ENCODE measurements at regions of chr11 and their contacts with region 1.

Region 1: GRCh38 chr11:102614485-102614884 is 10.6 kb downstream of the MMP20 start:
- DNase-seq: no peak
- ATAC-seq: no peak
- H3K4me3 Mint-ChIP-seq: no peak overlapping the region
- H3K27ac Mint-ChIP-seq: no peak overlapping the region
- H3K4me1 Mint-ChIP-seq: peaks cover 9% of the 10 kb centered on the region
- H3K27me3 Mint-ChIP-seq: no peaks in the 10 kb centered on the region

Region 2: DNA sequence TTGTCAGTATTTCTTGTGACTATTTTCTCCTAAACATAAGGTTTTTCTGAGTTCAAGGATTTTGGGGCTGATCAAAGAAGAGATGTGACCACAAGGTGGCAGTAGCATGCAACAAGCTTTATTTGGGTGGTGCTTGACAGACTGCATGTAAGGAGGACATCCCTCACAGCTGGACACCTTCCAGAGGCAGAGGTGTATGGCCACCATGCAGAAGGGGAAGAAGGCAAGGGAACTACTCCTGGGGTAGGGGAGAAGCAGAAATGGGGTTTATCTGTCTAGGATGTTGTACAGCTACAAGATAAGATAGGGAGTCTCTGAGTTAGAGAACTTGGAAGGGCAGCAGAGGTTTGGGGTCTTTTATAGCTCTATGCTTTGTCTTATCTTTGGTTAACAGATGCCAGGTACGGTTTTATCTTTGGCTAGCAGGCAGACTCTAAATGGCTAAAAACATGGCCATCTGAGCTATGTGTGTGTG is 272.6 kb before region 1 on chr11:
- CTCF ChIA-PET with region 1: interaction called, 148 read pairs
- POLR2A ChIA-PET with region 1: no interaction called
- DNase-seq: peak; percentile 86
- ATAC-seq: peak; percentile 69
- H3K4me3 Mint-ChIP-seq: no peak overlapping the region
- H3K27ac Mint-ChIP-seq: no peak overlapping the region
- H3K4me1 Mint-ChIP-seq: peaks cover 21% of the 10 kb centered on the region
- H3K27me3 Mint-ChIP-seq: no peaks in the 10 kb centered on the region

Region 3: GRCh38 chr11:102390667-102391465 is 223.6 kb before region 1 on chr11:
- CTCF ChIA-PET with region 1: interaction called, 43 read pairs
- POLR2A ChIA-PET with region 1: no interaction called
- DNase-seq: peak; percentile 64
- ATAC-seq: peak; percentile 70
- H3K4me3 Mint-ChIP-seq: no peak overlapping the region
- H3K27ac Mint-ChIP-seq: no peak overlapping the region
- H3K4me1 Mint-ChIP-seq: peaks cover 26% of the 10 kb centered on the region
- H3K27me3 Mint-ChIP-seq: no peaks in the 10 kb centered on the region

Region 4: DNA sequence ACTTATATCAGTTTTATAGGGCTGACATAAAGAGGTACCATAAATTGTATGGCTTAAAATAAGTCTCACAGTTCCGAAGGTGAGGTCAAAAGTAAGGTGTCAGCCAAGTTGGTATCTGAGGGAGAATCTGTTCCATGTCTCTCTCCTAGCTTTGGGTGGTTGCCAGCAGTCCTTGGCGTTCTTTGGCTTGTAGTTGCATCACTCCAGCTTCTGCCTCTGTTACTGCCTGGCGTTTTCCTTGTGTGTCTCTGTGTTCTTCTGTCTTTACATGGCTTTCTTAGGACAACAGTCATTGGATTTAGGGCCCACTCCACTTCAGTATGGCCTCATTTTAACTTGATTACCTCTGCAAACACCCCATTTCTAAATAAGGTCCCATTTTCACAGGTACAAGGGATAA is 100.6 kb before region 1 on chr11:
- CTCF ChIA-PET with region 1: interaction called, 19 read pairs
- POLR2A ChIA-PET with region 1: no interaction called
- DNase-seq: no peak
- ATAC-seq: no peak
- H3K4me3 Mint-ChIP-seq: no peak overlapping the region
- H3K27ac Mint-ChIP-seq: no peak overlapping the region
- H3K4me1 Mint-ChIP-seq: no peaks in the 10 kb centered on the region
- H3K27me3 Mint-ChIP-seq: peaks cover 8% of the 10 kb centered on the region

Region 5: GRCh38 chr11:102577182-102577581 is 37.3 kb before region 1 on chr11:
- CTCF ChIA-PET with region 1: interaction called, 17 read pairs
- POLR2A ChIA-PET with region 1: no interaction called
- DNase-seq: no peak
- ATAC-seq: peak; percentile 81
- H3K4me3 Mint-ChIP-seq: peak overlapping the region; percentile 40
- H3K27ac Mint-ChIP-seq: peak overlapping the region; percentile 66
- H3K4me1 Mint-ChIP-seq: peaks cover 27% of the 10 kb centered on the region
- H3K27me3 Mint-ChIP-seq: no peaks in the 10 kb centered on the region

Region 6: GRCh38 chr11:102760355-102761035 is 146.0 kb after region 1 on chr11:
- CTCF ChIA-PET with region 1: no interaction called
- POLR2A ChIA-PET with region 1: no interaction called
- DNase-seq: no peak
- ATAC-seq: no peak
- H3K4me3 Mint-ChIP-seq: no peak overlapping the region
- H3K27ac Mint-ChIP-seq: no peak overlapping the region
- H3K4me1 Mint-ChIP-seq: peaks cover 2% of the 10 kb centered on the region
- H3K27me3 Mint-ChIP-seq: peaks cover 3% of the 10 kb centered on the region

Region 7: DNA sequence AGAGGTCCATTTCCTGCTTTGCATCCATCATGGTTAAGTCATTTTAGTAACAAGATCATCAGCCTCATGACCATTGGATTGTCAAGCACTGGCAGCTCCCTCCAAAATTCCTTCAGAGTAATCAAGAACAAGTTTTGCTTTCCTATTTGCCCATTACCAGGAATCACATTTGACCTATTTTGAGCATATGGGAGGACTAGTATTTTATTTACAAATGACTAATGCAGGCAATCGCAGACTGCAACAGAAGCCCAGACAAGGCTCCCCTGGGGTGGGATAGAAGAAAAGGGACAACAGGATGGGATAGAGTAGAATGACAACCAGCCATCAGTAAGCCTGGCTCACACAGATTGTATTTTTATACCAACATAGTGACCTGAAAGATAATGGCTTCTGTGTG is 156.9 kb after region 1 on chr11:
- CTCF ChIA-PET with region 1: no interaction called
- POLR2A ChIA-PET with region 1: no interaction called
- DNase-seq: no peak
- ATAC-seq: no peak
- H3K4me3 Mint-ChIP-seq: no peak overlapping the region
- H3K27ac Mint-ChIP-seq: no peak overlapping the region
- H3K4me1 Mint-ChIP-seq: no peaks in the 10 kb centered on the region
- H3K27me3 Mint-ChIP-seq: peaks cover 4% of the 10 kb centered on the region

Region 8: GRCh38 chr11:102850973-102851745 is 236.7 kb after region 1 on chr11:
- CTCF ChIA-PET with region 1: no interaction called
- POLR2A ChIA-PET with region 1: no interaction called
- DNase-seq: no peak
- ATAC-seq: no peak
- H3K4me3 Mint-ChIP-seq: no peak overlapping the region
- H3K27ac Mint-ChIP-seq: no peak overlapping the region
- H3K4me1 Mint-ChIP-seq: no peaks in the 10 kb centered on the region
- H3K27me3 Mint-ChIP-seq: no peaks in the 10 kb centered on the region

Region 9: DNA sequence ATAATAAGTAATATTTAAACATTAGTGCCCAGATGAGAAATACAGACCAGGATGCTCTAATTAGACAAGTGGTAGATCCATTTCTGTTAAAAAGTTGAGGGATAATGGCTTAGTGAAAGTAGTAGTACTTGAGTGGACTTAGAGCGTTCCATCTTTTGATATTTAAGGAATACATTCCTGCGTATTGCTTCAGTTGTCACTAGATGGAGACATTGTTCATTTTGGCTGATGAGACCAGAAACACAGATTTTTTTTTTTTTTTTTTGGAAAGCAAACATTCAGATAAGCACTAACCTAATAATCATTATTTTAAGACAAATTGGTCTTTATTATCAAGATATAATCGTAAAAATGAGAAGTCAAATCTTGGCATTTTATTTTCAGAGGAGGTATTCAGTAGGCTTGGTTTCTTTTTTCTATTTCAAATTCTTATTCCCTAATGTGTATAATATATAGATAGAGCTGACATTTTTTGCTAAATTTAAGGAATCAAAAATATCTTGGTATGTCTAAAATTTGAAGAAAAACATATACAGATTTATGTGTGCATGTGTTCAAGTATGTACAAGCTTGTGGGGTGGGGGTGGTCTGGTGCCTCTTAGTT is 587.7 kb after region 1 on chr11:
- CTCF ChIA-PET with region 1: no interaction called
- POLR2A ChIA-PET with region 1: no interaction called
- DNase-seq: no peak
- ATAC-seq: no peak
- H3K4me3 Mint-ChIP-seq: no peak overlapping the region
- H3K27ac Mint-ChIP-seq: no peak overlapping the region
- H3K4me1 Mint-ChIP-seq: no peaks in the 10 kb centered on the region
- H3K27me3 Mint-ChIP-seq: no peaks in the 10 kb centered on the region

Measured in activated CD8-positive, alpha-beta T cell treated with anti-CD3 and anti-CD28 coated beads, Interleukin-2, amount 10 ng/mL, durations not matched to agents 7 days and 5 days (primary cell).